Posterior vena cava (tissue), 2 donors: ENCODE measurements at regions of chr2 and their contacts with region 1.

Region 1: GRCh38 chr2:120174963-120175581 is 48.1 kb downstream of the TMEM185B start:
- DNase-seq: no peak

Region 2: DNA sequence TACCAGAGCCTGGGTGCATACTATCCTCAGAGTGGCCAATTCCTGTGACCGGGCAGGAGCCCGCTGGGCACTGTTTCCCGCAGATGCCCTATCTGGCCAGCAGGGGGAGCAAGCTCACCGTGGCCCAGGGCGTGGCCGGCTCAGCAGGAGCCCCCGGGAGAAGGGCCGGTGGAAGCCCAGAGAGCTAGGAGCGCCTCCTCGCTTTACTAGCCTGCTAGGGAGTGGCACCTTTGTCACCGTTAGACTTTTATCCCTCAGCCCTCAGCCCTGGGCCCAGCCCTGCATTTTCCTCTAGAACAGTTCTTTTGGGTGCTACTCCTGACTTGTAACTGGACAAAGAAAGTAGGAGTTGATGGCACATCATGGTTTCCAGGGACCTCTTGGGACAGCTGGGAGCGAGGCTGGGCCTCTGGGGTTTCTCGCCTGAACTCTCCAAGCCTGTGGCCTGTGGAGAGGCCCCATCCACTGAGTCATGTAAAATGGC is 472.1 kb before region 1 on chr2:
- intact Hi-C with region 1: loop called in 1 of 2 experiments (anchors 10 kb)
- DNase-seq: peak; percentile 88